ENCODE measurements at regions of chr4 and their contacts with region 1.

Region 1: DNA sequence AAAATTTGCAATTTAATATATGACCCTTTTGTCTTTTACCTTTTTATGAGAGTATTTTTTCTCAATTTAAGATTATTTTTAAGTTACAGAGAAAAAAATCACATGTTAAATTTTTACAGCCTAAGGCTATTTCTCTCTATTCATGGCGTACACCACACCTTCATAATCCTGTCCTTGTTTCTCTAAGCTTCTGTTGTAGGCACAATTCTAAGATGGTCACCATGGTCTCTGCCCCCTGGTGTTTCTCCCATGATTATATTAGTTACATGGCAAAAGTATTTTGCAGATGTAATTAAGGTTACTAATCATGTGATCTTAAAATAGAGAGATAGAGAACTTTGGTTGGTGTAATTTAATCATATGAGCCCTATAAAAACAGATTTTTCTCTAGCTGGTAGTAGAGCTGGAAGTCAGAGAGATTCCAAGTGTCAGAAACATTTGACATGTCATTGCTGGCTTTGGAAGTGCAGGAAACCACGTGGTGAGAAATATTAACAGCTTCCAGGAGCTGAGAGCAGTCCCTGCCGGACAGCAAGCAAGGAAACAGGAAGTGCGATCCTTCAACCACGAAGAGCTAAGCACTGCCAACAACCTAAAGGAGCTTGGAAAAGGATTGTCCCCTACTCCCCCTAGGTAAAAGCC is 89.8 kb downstream of the EIF4E start:
- DNase-seq: no peak
- ATAC-seq: no peak
- H3K4me3 ChIP-seq: no peak overlapping the region
- H3K27ac ChIP-seq: no peak overlapping the region
- H3K4me1 ChIP-seq: no peaks in the 10 kb centered on the region
- H3K27me3 ChIP-seq: no peaks in the 10 kb centered on the region
- CTCF ChIP-seq: no peak
- EP300 ChIP-seq: no peak
- POLR2A ChIP-seq: no peak
- RAD21 ChIP-seq: no peak

Region 2: GRCh38 chr4:98745366-98745765 is 93.7 kb before region 1 on chr4:
- CTCF ChIA-PET with region 1: no interaction called
- POLR2A ChIA-PET with region 1: no interaction called
- in situ Hi-C with region 1: no loop called
- intact Hi-C with region 1: loop called (anchors 10 kb)
- DNase-seq: peak; percentile 23
- ATAC-seq: peak; percentile 48; the same call in 1 of the 3 replicates
- H3K4me3 ChIP-seq: no peak overlapping the region
- H3K27ac ChIP-seq: no peak overlapping the region
- H3K4me1 ChIP-seq: no peaks in the 10 kb centered on the region
- H3K27me3 ChIP-seq: no peaks in the 10 kb centered on the region
- CTCF ChIP-seq: peak; percentile 41
- EP300 ChIP-seq: no peak
- POLR2A ChIP-seq: no peak
- RAD21 ChIP-seq: no peak

Region 3: GRCh38 chr4:98864560-98864959 is 25.5 kb after region 1 on chr4:
- CTCF ChIA-PET with region 1: no interaction called
- POLR2A ChIA-PET with region 1: no interaction called
- in situ Hi-C with region 1: no loop called
- intact Hi-C with region 1: no loop called
- DNase-seq: no peak
- ATAC-seq: no peak
- H3K4me3 ChIP-seq: no peak overlapping the region
- H3K27ac ChIP-seq: no peak overlapping the region
- H3K4me1 ChIP-seq: no peaks in the 10 kb centered on the region
- H3K27me3 ChIP-seq: no peaks in the 10 kb centered on the region
- CTCF ChIP-seq: no peak
- EP300 ChIP-seq: no peak
- POLR2A ChIP-seq: no peak
- RAD21 ChIP-seq: no peak

Measured in HepG2 (cell line).